Naive thymus-derived CD4-positive, alpha-beta T cell (primary cell): ENCODE measurements at regions of chr3 and their contacts with region 1.

Region 1: DNA sequence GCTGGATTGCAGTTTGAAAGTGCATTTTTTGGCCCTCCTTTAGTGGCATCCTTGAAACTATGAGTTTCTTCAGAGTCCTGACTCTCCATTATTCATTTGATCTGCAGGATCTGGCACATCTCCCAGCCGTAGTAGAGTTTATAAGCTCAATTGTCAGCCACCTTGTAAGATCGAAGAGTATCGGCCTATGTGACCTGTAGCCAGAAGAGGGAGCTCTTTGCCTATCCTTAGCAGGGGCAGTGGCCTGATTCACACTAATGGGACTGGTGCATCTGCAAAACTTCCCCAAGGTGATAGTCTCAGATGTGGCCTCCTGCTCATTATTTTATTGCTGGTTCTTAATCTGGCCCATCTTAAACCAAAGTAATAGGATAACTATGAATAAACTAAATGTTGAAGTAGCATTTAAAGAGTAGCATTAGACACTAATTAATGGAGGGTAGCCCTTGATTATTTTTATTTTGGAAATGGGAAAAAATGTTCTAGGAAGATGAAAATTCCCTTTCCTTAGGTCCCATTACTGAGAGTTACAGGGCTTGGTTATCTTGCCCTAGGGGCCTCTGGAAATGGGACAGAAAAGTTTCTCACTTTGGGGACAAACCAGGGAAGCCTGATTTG is 21.2 kb downstream of the GCSAM start:
- DNase-seq: peak in 7 of 9 donors; percentile 52 to 75 (median 70)
- ATAC-seq: peak; percentile 96
- H3K4me3 ChIP-seq: no peak overlapping the region
- H3K4me3 Mint-ChIP-seq: peak overlapping the region in 1 of 10 donors; percentile 14
- H3K27ac ChIP-seq: no peak overlapping the region
- H3K27ac Mint-ChIP-seq: peak overlapping the region in 4 of 9 donors; percentile 28 to 48 (median 40)
- H3K4me1 ChIP-seq: no peaks in the 10 kb centered on the region
- H3K4me1 Mint-ChIP-seq: peaks cover 2 to 18% (median 9%) of the 10 kb centered on the region in 7 donors
- H3K27me3 ChIP-seq: no peaks in the 10 kb centered on the region
- H3K27me3 Mint-ChIP-seq: no peaks in the 10 kb centered on the region

Region 2: GRCh38 chr3:112128843-112129727 is 17.2 kb after region 1 on chr3:
- CTCF ChIA-PET with region 1: interaction called, 14 read pairs
- POLR2A ChIA-PET with region 1: interaction called, 5 read pairs
- intact Hi-C with region 1: loop called (anchors 1 kb)
- DNase-seq: peak in 8 of 9 donors; percentile 39 to 88 (median 83)
- ATAC-seq: peak; percentile 82
- H3K4me3 ChIP-seq: no peak overlapping the region
- H3K4me3 Mint-ChIP-seq: peak overlapping the region; percentile 23 to 100 (median 64)
- H3K27ac ChIP-seq: peak overlapping the region; percentile 82
- H3K27ac Mint-ChIP-seq: peak overlapping the region; percentile 87 to 95 (median 93)
- H3K4me1 ChIP-seq: peaks cover 41 to 72% of the 10 kb centered on the region in 2 donors
- H3K4me1 Mint-ChIP-seq: peaks cover 49 to 92% (median 90%) of the 10 kb centered on the region in 7 donors
- H3K27me3 ChIP-seq: no peaks in the 10 kb centered on the region
- H3K27me3 Mint-ChIP-seq: no peaks in the 10 kb centered on the region

Region 3: DNA sequence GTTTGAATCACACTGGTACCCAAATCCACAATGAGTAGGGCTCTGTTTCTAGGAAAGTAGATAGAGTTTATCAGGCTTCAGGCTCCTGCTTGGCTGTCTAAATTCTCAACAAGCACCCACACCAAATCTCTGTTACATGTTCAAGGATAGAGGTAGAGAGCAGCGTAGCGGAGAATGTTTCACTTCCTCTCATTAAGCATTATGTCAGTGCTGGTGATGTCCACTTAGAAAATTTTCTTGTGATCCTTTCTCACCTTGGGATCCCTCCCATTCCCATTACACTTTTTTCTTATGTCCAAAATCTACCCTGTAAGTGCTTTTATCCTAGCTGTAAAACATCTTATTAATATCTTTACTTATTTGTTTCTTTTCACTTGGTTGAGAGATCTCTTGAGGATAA is 55.9 kb after region 1 on chr3:
- CTCF ChIA-PET with region 1: interaction called, 3 read pairs
- POLR2A ChIA-PET with region 1: no interaction called
- intact Hi-C with region 1: loop called in 1 of 2 experiments (anchors 1 kb)
- DNase-seq: no peak
- ATAC-seq: no peak
- H3K4me3 ChIP-seq: no peak overlapping the region
- H3K4me3 Mint-ChIP-seq: no peak overlapping the region
- H3K27ac ChIP-seq: no peak overlapping the region
- H3K27ac Mint-ChIP-seq: no peak overlapping the region
- H3K4me1 ChIP-seq: no peaks in the 10 kb centered on the region
- H3K4me1 Mint-ChIP-seq: no peaks in the 10 kb centered on the region
- H3K27me3 ChIP-seq: no peaks in the 10 kb centered on the region
- H3K27me3 Mint-ChIP-seq: peaks cover 0 to 5% (median 0%) of the 10 kb centered on the region in 5 donors

Region 4: GRCh38 chr3:112327371-112327951 is 215.6 kb after region 1 on chr3:
- CTCF ChIA-PET with region 1: interaction called, 6 read pairs
- POLR2A ChIA-PET with region 1: interaction called, 3 read pairs
- intact Hi-C with region 1: loop called (anchors 1 kb)
- DNase-seq: peak in 7 of 9 donors; percentile 41 to 76 (median 66)
- ATAC-seq: peak; percentile 100
- H3K4me3 ChIP-seq: no peak overlapping the region
- H3K4me3 Mint-ChIP-seq: no peak overlapping the region
- H3K27ac ChIP-seq: no peak overlapping the region
- H3K27ac Mint-ChIP-seq: no peak overlapping the region
- H3K4me1 ChIP-seq: no peaks in the 10 kb centered on the region
- H3K4me1 Mint-ChIP-seq: peaks cover 0 to 8% (median 6%) of the 10 kb centered on the region in 7 donors
- H3K27me3 ChIP-seq: no peaks in the 10 kb centered on the region
- H3K27me3 Mint-ChIP-seq: peaks cover 0 to 20% (median 5%) of the 10 kb centered on the region in 5 donors

Region 5: GRCh38 chr3:112437146-112438022 is 325.5 kb after region 1 on chr3:
- CTCF ChIA-PET with region 1: no interaction called
- POLR2A ChIA-PET with region 1: no interaction called
- intact Hi-C with region 1: loop called (anchors 1 to 5 kb)
- DNase-seq: peak in 4 of 9 donors; percentile 8 to 23 (median 14)
- ATAC-seq: peak; percentile 83
- H3K4me3 ChIP-seq: peak overlapping the region; percentile 9
- H3K4me3 Mint-ChIP-seq: no peak overlapping the region
- H3K27ac ChIP-seq: no peak overlapping the region
- H3K27ac Mint-ChIP-seq: peak overlapping the region in 2 of 9 donors; percentile 35 to 53
- H3K4me1 ChIP-seq: peaks cover 0 to 7% of the 10 kb centered on the region in 2 donors
- H3K4me1 Mint-ChIP-seq: peaks cover 5 to 29% (median 16%) of the 10 kb centered on the region in 7 donors
- H3K27me3 ChIP-seq: no peaks in the 10 kb centered on the region
- H3K27me3 Mint-ChIP-seq: no peaks in the 10 kb centered on the region

Region 6: GRCh38 chr3:112531358-112531781 is 419.5 kb after region 1 on chr3:
- CTCF ChIA-PET with region 1: interaction called, 10 read pairs
- POLR2A ChIA-PET with region 1: no interaction called
- intact Hi-C with region 1: loop called in 1 of 2 experiments (anchors 1 kb)
- DNase-seq: peak in 5 of 9 donors; percentile 25 to 40 (median 25)
- ATAC-seq: peak; percentile 45
- H3K4me3 ChIP-seq: no peak overlapping the region
- H3K4me3 Mint-ChIP-seq: no peak overlapping the region
- H3K27ac ChIP-seq: no peak overlapping the region
- H3K27ac Mint-ChIP-seq: peak overlapping the region in 6 of 9 donors; percentile 7 to 72 (median 14)
- H3K4me1 ChIP-seq: no peaks in the 10 kb centered on the region
- H3K4me1 Mint-ChIP-seq: peaks cover 0 to 5% (median 3%) of the 10 kb centered on the region in 7 donors
- H3K27me3 ChIP-seq: no peaks in the 10 kb centered on the region
- H3K27me3 Mint-ChIP-seq: no peaks in the 10 kb centered on the region

Region 7: GRCh38 chr3:112629425-112629824 is 517.5 kb after region 1 on chr3:
- CTCF ChIA-PET with region 1: no interaction called
- POLR2A ChIA-PET with region 1: no interaction called
- intact Hi-C with region 1: no loop called
- DNase-seq: no peak
- ATAC-seq: peak; percentile 41
- H3K4me3 ChIP-seq: no peak overlapping the region
- H3K4me3 Mint-ChIP-seq: no peak overlapping the region
- H3K27ac ChIP-seq: no peak overlapping the region
- H3K27ac Mint-ChIP-seq: no peak overlapping the region
- H3K4me1 ChIP-seq: no peaks in the 10 kb centered on the region
- H3K4me1 Mint-ChIP-seq: peaks cover 0 to 5% (median 0%) of the 10 kb centered on the region in 7 donors
- H3K27me3 ChIP-seq: no peaks in the 10 kb centered on the region
- H3K27me3 Mint-ChIP-seq: peaks cover 0 to 15% (median 0%) of the 10 kb centered on the region in 5 donors